CD4-positive, alpha-beta memory T cell (primary cell): ENCODE measurements at regions of chr2 and their contacts with region 1.

Region 1: GRCh38 chr2:174492963-174493431 is 6.2 kb upstream of the GPR155 start:
- DNase-seq: peak; percentile 76 to 86 (median 83)
- H3K4me3 ChIP-seq: peak overlapping the region; percentile 33 to 35
- H3K4me3 Mint-ChIP-seq: peak overlapping the region; percentile 84 to 95 (median 90)
- H3K27ac ChIP-seq: peak overlapping the region; percentile 78
- H3K27ac Mint-ChIP-seq: peak overlapping the region; percentile 91 to 98 (median 96)
- H3K4me1 ChIP-seq: peaks cover 80% of the 10 kb centered on the region
- H3K4me1 Mint-ChIP-seq: peaks cover 49 to 87% (median 66%) of the 10 kb centered on the region in 4 donors
- H3K27me3 ChIP-seq: no peaks in the 10 kb centered on the region
- H3K27me3 Mint-ChIP-seq: no peaks in the 10 kb centered on the region

Region 2: DNA sequence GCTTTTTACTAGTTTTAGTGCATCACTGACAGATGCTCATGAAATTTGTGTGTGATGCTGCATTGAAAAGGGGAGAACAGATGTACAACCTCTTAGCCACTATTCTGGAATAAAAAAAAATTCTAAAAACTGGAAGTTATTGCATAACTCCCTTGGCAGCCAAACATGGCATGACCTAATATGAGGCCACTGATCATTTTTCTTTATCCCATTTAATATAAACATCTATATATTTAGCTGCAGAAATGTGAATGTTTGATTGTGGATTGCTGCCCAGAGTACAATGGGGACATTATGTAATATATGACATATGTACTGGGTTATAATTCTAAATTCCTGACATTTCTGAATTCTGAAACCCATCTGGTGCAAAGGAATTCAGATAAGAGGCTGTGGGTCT is 1051.8 kb before region 1 on chr2:
- CTCF ChIA-PET with region 1: no interaction called
- POLR2A ChIA-PET with region 1: no interaction called
- intact Hi-C with region 1: no loop called
- DNase-seq: no peak
- H3K4me3 ChIP-seq: no peak overlapping the region
- H3K4me3 Mint-ChIP-seq: no peak overlapping the region
- H3K27ac ChIP-seq: no peak overlapping the region
- H3K27ac Mint-ChIP-seq: no peak overlapping the region
- H3K4me1 ChIP-seq: no peaks in the 10 kb centered on the region
- H3K4me1 Mint-ChIP-seq: peaks cover 0 to under 1% (median 0%) of the 10 kb centered on the region in 4 donors
- H3K27me3 ChIP-seq: no peaks in the 10 kb centered on the region
- H3K27me3 Mint-ChIP-seq: peaks cover 4 to 7% of the 10 kb centered on the region in 2 donors

Region 3: DNA sequence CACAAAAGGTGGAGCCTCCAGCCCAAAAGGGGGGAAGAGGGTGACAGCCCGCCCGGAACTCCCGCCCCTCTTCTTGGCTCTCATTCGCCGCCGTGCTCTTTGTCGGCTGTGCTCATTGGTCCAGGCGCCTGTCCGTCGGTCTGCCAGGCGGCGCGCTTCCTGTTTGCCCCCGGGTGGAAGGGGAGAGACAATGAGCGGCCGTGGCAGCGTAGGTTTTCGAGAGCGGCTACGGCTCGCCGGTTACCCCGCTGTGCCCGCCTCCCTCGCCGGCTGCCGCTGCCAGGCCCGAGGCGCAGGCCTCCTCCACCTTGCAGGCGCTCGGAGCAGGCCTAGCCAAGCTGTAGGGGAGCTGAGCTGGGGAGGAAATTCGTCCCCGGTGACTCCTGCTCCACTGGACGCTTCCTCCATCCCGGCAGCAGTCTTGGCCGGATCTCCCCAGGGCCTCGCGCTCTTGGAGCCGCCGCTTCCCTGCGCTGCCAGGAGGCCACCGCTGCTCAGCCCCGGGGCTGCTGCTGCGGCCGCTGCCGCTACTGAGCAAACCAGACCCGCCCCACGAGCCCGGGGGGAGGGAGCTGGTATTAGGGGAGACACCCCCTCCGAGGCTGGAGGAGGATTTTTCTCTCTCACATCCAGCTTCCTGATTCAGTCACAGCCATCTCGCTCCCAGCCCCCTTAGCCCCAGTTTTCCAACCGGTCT is 527.5 kb before region 1 on chr2 and contains the start of gene SP3:
- CTCF ChIA-PET with region 1: no interaction called
- POLR2A ChIA-PET with region 1: no interaction called
- intact Hi-C with region 1: loop called (anchors 1 kb)
- DNase-seq: peak; percentile 95 to 97 (median 96)
- H3K4me3 ChIP-seq: peak within 1 kb of the TSS; percentile 53 to 83
- H3K4me3 Mint-ChIP-seq: peak within 1 kb of the TSS; percentile 90 to 99 (median 96)
- H3K27ac ChIP-seq: peak within 1 kb of the TSS; percentile 96
- H3K27ac Mint-ChIP-seq: peak within 1 kb of the TSS; percentile 94 to 100 (median 98)
- H3K4me1 ChIP-seq: peaks cover 33% of the 10 kb centered on the region
- H3K4me1 Mint-ChIP-seq: peaks cover 23 to 51% (median 35%) of the 10 kb centered on the region in 4 donors
- H3K27me3 ChIP-seq: no peaks in the 10 kb centered on the region
- H3K27me3 Mint-ChIP-seq: no peaks in the 10 kb centered on the region
- total RNA-seq, gene SP3: 117 to 130 TPM

Region 4: DNA sequence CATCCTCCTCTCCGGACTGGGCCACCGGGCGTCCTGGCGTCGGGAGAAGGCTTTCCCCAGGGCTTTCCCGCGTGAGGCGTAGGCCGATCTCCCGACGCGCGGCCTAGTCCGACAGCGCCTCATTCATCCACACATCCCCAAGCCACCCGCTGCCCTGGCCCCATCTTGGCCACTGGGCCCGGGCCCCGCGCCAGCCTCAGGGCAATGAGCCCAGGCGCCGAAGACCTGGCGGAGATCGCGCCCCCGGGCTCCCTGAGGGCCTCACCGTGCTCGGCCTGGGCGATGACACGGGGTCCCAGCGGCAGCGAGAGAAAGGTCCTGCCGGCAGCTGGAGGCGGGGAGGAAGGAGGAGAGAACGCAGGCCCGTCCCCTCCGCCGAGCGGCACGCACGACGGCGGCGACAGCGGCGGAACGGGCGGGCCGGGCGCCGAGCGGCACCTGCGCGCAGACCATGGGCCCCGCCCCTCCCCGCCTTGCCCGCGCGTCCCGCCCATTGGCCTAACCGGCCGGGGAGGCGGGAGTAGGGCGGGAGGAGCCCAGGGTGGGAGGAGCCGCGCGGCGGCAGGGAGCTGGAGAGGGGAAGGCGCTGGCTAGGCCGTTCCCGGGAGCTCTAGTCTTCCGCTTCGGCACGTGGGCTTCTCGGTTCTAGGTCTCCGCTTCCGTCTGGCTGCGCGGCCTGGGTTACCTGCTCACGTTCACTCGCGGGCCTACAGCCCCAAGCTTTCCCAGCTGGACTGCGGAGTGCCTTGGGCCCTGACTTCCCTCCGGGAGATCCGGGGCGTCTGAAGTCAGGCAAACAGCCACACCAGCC is 244.6 kb before region 1 on chr2 and contains the start of gene OLA1:
- CTCF ChIA-PET with region 1: no interaction called
- POLR2A ChIA-PET with region 1: no interaction called
- intact Hi-C with region 1: loop called (anchors 5 kb)
- DNase-seq: peak; percentile 93 to 99 (median 95)
- H3K4me3 ChIP-seq: peak within 1 kb of the TSS; percentile 84 to 87
- H3K4me3 Mint-ChIP-seq: peak within 1 kb of the TSS; percentile 79 to 88 (median 85)
- H3K27ac ChIP-seq: peak within 1 kb of the TSS; percentile 78
- H3K27ac Mint-ChIP-seq: peak within 1 kb of the TSS; percentile 63 to 87 (median 80)
- H3K4me1 ChIP-seq: peaks cover 14% of the 10 kb centered on the region
- H3K4me1 Mint-ChIP-seq: peaks cover 11 to 32% (median 19%) of the 10 kb centered on the region in 4 donors
- H3K27me3 ChIP-seq: no peaks in the 10 kb centered on the region
- H3K27me3 Mint-ChIP-seq: no peaks in the 10 kb centered on the region
- total RNA-seq, gene OLA1: 31.1 to 31.2 TPM

Region 5: GRCh38 chr2:174454566-174454965 is 38.4 kb before region 1 on chr2:
- CTCF ChIA-PET with region 1: no interaction called
- POLR2A ChIA-PET with region 1: no interaction called
- intact Hi-C with region 1: no loop called
- DNase-seq: no peak
- H3K4me3 ChIP-seq: no peak overlapping the region
- H3K4me3 Mint-ChIP-seq: no peak overlapping the region
- H3K27ac ChIP-seq: no peak overlapping the region
- H3K27ac Mint-ChIP-seq: peak overlapping the region in 1 of 7 donors; percentile 22
- H3K4me1 ChIP-seq: peaks cover 10% of the 10 kb centered on the region
- H3K4me1 Mint-ChIP-seq: peaks cover 6 to 14% (median 9%) of the 10 kb centered on the region in 4 donors
- H3K27me3 ChIP-seq: no peaks in the 10 kb centered on the region
- H3K27me3 Mint-ChIP-seq: no peaks in the 10 kb centered on the region

Region 6: GRCh38 chr2:174522553-174522952 is 29.6 kb after region 1 on chr2:
- CTCF ChIA-PET with region 1: interaction called, 44 read pairs
- POLR2A ChIA-PET with region 1: interaction called, 8 read pairs
- intact Hi-C with region 1: no loop called
- DNase-seq: peak in 2 of 5 donors; percentile 7 to 13
- H3K4me3 ChIP-seq: no peak overlapping the region
- H3K4me3 Mint-ChIP-seq: no peak overlapping the region
- H3K27ac ChIP-seq: no peak overlapping the region
- H3K27ac Mint-ChIP-seq: no peak overlapping the region
- H3K4me1 ChIP-seq: no peaks in the 10 kb centered on the region
- H3K4me1 Mint-ChIP-seq: peaks cover 5 to 9% (median 8%) of the 10 kb centered on the region in 4 donors
- H3K27me3 ChIP-seq: no peaks in the 10 kb centered on the region
- H3K27me3 Mint-ChIP-seq: peaks cover 0 to 2% of the 10 kb centered on the region in 2 donors

Region 7: GRCh38 chr2:174553811-174554493 is 61.0 kb after region 1 on chr2:
- CTCF ChIA-PET with region 1: interaction called, 3 read pairs
- POLR2A ChIA-PET with region 1: interaction called, 14 read pairs
- intact Hi-C with region 1: no loop called
- DNase-seq: peak; percentile 33 to 58 (median 49)
- H3K4me3 ChIP-seq: no peak overlapping the region
- H3K4me3 Mint-ChIP-seq: peak overlapping the region; percentile 57 to 85 (median 74)
- H3K27ac ChIP-seq: peak overlapping the region; percentile 67
- H3K27ac Mint-ChIP-seq: peak overlapping the region; percentile 83 to 97 (median 89)
- H3K4me1 ChIP-seq: peaks cover 39% of the 10 kb centered on the region
- H3K4me1 Mint-ChIP-seq: peaks cover 31 to 52% (median 37%) of the 10 kb centered on the region in 4 donors
- H3K27me3 ChIP-seq: no peaks in the 10 kb centered on the region
- H3K27me3 Mint-ChIP-seq: no peaks in the 10 kb centered on the region